ENCODE measurements at regions of chr12 and their contacts with region 1.

Region 1: DNA sequence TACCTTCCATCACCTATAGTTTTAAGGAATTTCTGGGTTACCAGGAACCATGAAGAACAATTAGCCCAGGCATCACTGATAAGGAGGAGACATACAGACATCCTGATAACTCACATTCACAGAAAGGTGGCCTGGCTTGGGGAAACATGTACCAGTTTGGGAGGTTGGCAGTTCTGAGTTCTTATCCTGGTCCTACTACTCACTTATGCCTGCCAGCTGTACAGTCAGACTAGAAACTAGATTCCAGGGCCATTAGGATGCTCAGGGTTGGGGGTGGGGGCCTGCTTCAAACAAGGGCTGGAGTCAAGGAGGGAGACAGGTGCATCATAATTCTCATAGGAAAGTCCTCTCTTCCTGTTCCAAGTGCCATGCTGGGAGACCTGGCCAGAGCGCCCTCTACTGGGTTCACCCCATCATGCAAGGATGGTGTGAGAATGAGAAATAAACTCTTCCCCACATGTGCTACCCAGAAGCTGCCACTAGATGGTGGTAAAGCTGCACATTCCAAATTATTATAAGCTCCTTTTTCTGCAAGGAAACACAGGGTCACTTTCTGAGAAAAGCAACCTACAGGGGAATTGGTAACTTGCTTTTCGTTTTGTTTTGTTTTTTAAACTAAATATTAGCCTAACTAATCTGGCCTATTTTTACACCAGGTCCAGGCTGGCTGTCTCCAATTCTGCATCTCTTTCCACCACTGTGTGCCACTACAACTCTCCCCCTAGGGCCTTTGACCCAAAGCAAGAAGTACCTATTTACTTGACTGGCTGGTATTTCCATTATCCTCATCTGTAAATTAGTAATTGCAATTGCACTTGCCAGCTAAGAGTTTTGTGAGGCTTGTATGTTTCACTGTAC is 14.5 kb downstream of the OAS2 start:
- DNase-seq: peak; percentile 56 to 67
- H3K4me3 ChIP-seq: no peak overlapping the region
- H3K4me3 Mint-ChIP-seq: no peak overlapping the region
- H3K27ac Mint-ChIP-seq: no peak overlapping the region
- H3K4me1 ChIP-seq: no peaks in the 10 kb centered on the region
- H3K4me1 Mint-ChIP-seq: peaks cover 6% of the 10 kb centered on the region
- H3K27me3 ChIP-seq: no peaks in the 10 kb centered on the region
- H3K27me3 Mint-ChIP-seq: no peaks in the 10 kb centered on the region
- CTCF ChIP-seq: peak; percentile 77 to 83

Region 2: GRCh38 chr12:113022563-113023297 is 30.0 kb after region 1 on chr12:
- CTCF ChIA-PET with region 1: interaction called, 10 read pairs
- POLR2A ChIA-PET with region 1: no interaction called
- intact Hi-C with region 1: no loop called
- DNase-seq: no peak
- H3K4me3 ChIP-seq: no peak overlapping the region
- H3K4me3 Mint-ChIP-seq: no peak overlapping the region
- H3K27ac Mint-ChIP-seq: no peak overlapping the region
- H3K4me1 ChIP-seq: no peaks in the 10 kb centered on the region
- H3K4me1 Mint-ChIP-seq: no peaks in the 10 kb centered on the region
- H3K27me3 ChIP-seq: no peaks in the 10 kb centered on the region
- H3K27me3 Mint-ChIP-seq: peaks cover 17% of the 10 kb centered on the region
- CTCF ChIP-seq: no peak

Measured in Caco-2 (cell line).